ENCODE measurements at regions of chr9 and their contacts with region 1.

Region 1: DNA sequence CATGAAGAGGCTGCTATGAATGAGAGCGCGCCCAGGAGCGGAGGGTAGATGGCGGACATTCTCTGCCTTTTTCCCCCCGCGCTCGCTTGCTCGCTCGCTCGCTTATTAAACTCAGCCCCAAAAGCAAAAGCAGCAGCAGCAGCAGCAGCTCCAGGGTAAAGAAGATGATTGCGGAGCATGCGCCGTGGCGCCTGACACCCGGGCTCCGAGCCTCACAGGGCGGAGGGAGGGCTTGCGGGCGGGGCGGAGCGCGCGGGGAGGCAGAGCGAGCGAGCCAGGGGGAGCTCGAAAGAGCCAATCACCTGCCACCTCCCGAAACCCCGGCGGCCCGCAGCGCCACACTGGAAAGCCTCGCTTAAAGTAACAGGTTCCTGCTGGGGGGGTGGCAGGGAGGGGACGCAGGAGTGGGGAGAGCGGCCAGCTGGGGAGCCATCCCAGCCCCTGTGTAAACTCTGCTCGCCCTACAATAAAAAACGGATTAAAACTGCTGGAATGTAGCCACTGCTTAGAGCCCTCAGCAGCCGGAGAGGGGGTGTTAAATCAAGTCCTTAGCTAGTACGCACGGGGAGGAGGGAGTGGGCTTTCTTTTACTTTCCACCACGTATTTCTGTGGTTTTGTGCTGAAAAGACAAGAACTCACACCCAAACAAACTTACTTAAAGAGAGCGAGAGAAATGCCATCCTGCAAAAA is at the start of gene MLLT3:
- DNase-seq: peak; percentile 94
- H3K4me3 ChIP-seq: peak within 1 kb of the TSS; percentile 73
- H3K27ac ChIP-seq: peak within 1 kb of the TSS; percentile 44
- H3K4me1 ChIP-seq: peaks cover 20% of the 10 kb centered on the region
- CTCF ChIP-seq: 0 out of 2 replicates have a peak, but pooled peaks have one; percentile 27
- total RNA-seq, gene MLLT3: 7.1 and 7.8 TPM in 2 replicates

Region 2: GRCh38 chr9:20356403-20357035 is 266.0 kb before region 1 on chr9:
- CTCF ChIA-PET with region 1: interaction called, 6 read pairs
- POLR2A ChIA-PET with region 1: interaction called, 3 read pairs
- intact Hi-C with region 1: loop called (anchors 1 kb)
- DNase-seq: peak; percentile 65
- H3K4me3 ChIP-seq: no peak overlapping the region
- H3K27ac ChIP-seq: no peak overlapping the region
- H3K4me1 ChIP-seq: peaks cover 6% of the 10 kb centered on the region
- CTCF ChIP-seq: peak; percentile 79

Region 3: DNA sequence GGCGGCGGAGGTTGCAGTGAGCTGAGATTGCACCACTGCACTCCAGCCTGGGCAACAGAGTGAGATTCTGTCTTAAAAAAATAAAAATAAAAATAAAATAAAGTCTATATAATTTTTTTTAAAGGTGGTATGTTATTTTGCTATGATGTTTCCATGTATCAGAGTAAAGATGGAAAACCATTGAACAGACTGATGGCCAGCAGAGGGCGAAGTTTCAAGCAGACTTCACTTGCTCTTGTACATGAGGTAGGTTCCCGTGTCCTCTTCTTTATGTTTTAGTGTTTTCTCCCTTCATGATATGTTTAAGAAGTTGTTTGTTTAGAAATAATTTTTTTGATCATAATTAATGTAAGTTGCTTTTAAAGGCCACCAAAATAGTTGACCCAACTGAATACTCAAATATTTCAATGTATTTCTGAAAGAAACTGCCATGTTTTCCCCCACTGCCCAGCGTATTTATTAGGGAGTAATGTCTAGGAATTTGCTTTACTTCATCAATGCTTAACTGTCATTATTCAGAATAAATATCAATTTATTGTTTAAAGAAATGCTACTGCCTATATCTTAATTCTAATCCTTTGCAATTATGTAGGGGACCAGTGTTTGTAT is 262.6 kb after region 1 on chr9:
- CTCF ChIA-PET with region 1: no interaction called
- POLR2A ChIA-PET with region 1: no interaction called
- intact Hi-C with region 1: loop called (anchors 10 kb)
- DNase-seq: peak; percentile 50
- H3K4me3 ChIP-seq: no peak overlapping the region
- H3K27ac ChIP-seq: no peak overlapping the region
- H3K4me1 ChIP-seq: no peaks in the 10 kb centered on the region
- CTCF ChIP-seq: peak; percentile 77

Region 4: GRCh38 chr9:21096172-21096900 is 473.9 kb after region 1 on chr9:
- CTCF ChIA-PET with region 1: no interaction called
- POLR2A ChIA-PET with region 1: interaction called, 3 read pairs
- intact Hi-C with region 1: loop called (anchors 5 kb)
- DNase-seq: peak; percentile 47
- H3K4me3 ChIP-seq: peak overlapping the region; percentile 29
- H3K27ac ChIP-seq: no peak overlapping the region
- H3K4me1 ChIP-seq: peaks cover 20% of the 10 kb centered on the region
- CTCF ChIP-seq: no peak

Measured in OCI-LY7 (cell line).